IMR-90 (cell line): ENCODE measurements at regions of chr10 and their contacts with region 1.

Region 1: DNA sequence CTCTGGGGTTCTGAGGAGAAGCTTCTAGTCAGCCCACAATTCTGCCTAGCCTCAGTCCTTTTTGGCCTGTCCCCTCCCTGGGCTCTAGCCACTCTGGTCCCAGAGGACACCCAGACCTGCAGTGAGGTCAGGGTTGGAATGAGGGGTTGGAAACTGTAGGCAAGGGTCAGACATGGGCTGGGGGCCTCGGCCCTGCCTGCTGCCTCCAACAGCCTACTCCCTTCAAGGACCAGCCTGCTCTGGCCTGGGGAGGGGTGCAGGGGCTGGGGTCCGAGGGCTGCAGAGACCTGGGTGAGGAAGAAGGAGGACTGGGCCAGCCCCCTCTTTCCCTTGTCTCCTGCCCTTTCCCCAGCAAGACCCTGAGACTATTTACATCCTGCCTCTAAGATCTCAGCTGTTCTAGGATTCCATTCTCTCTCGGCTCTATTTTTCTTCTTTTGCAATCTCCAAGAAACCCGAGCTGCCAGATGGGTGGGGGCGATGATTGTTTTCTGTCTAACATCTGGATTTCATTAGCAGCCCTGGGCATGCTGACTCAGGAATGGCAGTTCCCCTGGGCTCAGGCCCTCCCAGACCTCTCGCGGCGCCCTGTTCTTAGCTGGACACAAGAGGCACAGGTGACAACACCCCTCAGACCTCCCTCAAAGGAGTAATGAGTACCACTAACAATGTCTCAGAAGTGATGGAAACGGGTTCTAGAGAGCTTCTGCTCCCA is 23.1 kb downstream of the ZCCHC24 start:
- DNase-seq: peak; percentile 96
- ATAC-seq: peak; percentile 80
- H3K4me3 ChIP-seq: no peak overlapping the region
- H3K27ac ChIP-seq: peak overlapping the region; percentile 93
- H3K4me1 ChIP-seq: peaks cover 45% of the 10 kb centered on the region
- H3K27me3 ChIP-seq: no peaks in the 10 kb centered on the region
- CTCF ChIP-seq: no peak
- POLR2A ChIP-seq: no peak
- RAD21 ChIP-seq: no peak

Region 2: GRCh38 chr10:78981257-78981969 is 440.9 kb before region 1 on chr10:
- CTCF ChIA-PET with region 1: no interaction called
- POLR2A ChIA-PET with region 1: no interaction called
- dilution Hi-C with region 1: no loop called
- in situ Hi-C with region 1: no loop called
- intact Hi-C with region 1: no loop called
- DNase-seq: no peak
- ATAC-seq: no peak
- H3K4me3 ChIP-seq: no peak overlapping the region
- H3K27ac ChIP-seq: no peak overlapping the region
- H3K4me1 ChIP-seq: peaks cover 20% of the 10 kb centered on the region
- H3K27me3 ChIP-seq: peaks cover 10% of the 10 kb centered on the region
- CTCF ChIP-seq: no peak
- POLR2A ChIP-seq: no peak
- RAD21 ChIP-seq: no peak

Region 3: GRCh38 chr10:79358783-79359182 is 63.6 kb before region 1 on chr10:
- CTCF ChIA-PET with region 1: no interaction called
- POLR2A ChIA-PET with region 1: interaction called, 12 read pairs
- dilution Hi-C with region 1: no loop called
- in situ Hi-C with region 1: no loop called
- intact Hi-C with region 1: no loop called
- DNase-seq: no peak
- ATAC-seq: no peak
- H3K4me3 ChIP-seq: no peak overlapping the region
- H3K27ac ChIP-seq: no peak overlapping the region
- H3K4me1 ChIP-seq: no peaks in the 10 kb centered on the region
- H3K27me3 ChIP-seq: no peaks in the 10 kb centered on the region
- CTCF ChIP-seq: no peak
- POLR2A ChIP-seq: no peak
- RAD21 ChIP-seq: no peak

Region 4: DNA sequence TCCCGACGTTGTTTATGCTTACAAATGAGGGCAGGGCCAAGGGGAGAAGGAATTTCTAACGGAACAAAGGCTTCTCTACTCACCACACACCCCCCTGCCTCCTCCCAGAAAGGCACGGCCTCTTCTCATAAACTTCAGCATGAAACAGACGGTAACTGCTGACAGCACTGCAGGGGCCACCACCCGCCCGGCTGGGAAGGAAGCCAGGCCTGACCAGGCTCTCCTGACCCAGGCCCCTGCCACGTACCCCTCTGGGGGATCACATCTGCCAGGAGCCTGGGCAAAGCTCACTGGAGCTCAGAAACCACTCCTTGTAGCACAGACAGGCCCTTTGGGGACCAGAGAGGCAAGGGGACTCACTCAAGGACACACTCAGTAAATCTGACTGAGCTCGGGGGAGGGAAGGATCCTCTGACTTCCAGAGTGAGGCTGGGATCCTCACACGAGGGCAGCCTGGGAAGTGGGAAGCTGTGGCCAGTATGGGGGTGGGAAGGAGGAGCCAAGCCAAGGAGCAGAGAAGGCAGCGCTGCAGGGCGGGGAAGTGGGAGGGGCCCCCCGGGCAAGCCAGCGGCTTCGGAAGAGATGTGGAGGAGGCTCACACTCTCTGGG is 23.0 kb before region 1 on chr10:
- CTCF ChIA-PET with region 1: interaction called, 3 read pairs
- POLR2A ChIA-PET with region 1: no interaction called
- dilution Hi-C with region 1: no loop called
- in situ Hi-C with region 1: no loop called
- intact Hi-C with region 1: loop called (anchors 1 kb)
- DNase-seq: peak; percentile 95
- ATAC-seq: peak; percentile 90
- H3K4me3 ChIP-seq: no peak overlapping the region
- H3K27ac ChIP-seq: peak overlapping the region; percentile 95
- H3K4me1 ChIP-seq: peaks cover 49% of the 10 kb centered on the region
- H3K27me3 ChIP-seq: no peaks in the 10 kb centered on the region
- CTCF ChIP-seq: no peak
- POLR2A ChIP-seq: peak; percentile 85
- RAD21 ChIP-seq: no peak; the same call in 1 of the 2 replicates